MCF 10A (cell line): ENCODE measurements at regions of chr9 and their contacts with region 1.

Region 1: DNA sequence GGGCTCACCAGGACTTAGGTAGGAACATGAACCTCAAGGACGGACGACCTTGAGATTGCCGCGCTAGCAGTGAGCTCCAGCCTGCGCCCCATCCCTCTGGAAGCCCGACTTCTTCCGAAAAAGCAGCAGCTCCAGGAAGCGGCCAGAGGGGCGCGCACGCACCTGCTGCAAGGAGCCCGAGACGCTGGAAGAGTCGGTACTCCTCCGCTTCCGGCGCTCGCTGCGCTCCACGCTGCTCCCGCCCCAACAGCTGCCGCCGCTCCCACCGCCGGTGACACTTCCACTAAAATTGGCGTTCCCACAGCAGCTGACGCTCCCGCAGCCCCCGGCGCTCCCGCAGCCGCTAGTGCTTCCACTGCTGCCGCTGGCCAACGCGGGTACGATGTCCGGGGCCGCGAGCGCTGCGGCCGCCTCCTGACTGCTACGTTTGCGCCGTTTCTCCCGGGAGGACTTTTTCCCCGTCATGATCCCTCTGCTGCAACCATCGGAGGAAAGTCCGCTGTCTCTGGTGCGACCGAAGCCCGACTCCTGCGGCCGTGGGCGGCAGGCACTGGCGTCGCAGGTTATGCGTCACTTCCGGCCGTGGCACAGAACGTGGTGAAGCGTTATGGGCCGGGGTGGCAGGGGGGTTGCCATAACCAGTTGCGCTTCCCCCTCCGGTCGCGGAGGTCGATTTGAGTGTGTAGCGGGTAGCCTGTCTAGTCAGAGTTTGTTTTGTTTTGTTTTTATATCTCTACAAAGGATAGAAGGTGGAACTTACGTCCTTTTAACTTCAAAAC is at the start of gene CAAP1:
- DNase-seq: peak; percentile 93
- H3K4me3 Mint-ChIP-seq: peak within 1 kb of the TSS; percentile 100
- H3K27ac Mint-ChIP-seq: peak within 1 kb of the TSS; percentile 100
- H3K4me1 Mint-ChIP-seq: peaks cover 16% of the 10 kb centered on the region
- H3K27me3 Mint-ChIP-seq: no peaks in the 10 kb centered on the region
- CTCF ChIP-seq: peak; percentile 38
- total RNA-seq, gene CAAP1: 29.2 and 35.2 TPM in 2 replicates

Region 2: DNA sequence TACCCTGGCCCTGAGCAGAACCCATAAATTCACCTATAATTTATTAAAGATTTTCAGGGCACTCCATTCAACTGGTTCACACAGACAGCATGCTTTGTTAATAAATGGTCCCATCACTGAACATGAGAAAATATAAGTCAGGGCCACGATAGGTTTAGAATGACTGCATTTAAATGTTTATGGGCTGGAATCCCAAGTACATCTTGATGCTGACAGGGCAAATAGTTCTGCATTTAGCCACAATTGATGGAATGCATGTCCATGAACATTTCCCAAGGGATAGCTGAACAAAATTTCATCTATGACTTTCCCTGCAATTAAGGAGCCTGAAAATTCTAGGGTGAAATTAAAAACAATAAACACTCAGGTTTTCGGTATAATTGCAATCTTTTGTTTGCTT is 124.3 kb before region 1 on chr9:
- CTCF ChIA-PET with region 1: no interaction called
- POLR2A ChIA-PET with region 1: no interaction called
- intact Hi-C with region 1: no loop called
- DNase-seq: no peak
- H3K4me3 Mint-ChIP-seq: no peak overlapping the region
- H3K27ac Mint-ChIP-seq: no peak overlapping the region
- H3K4me1 Mint-ChIP-seq: no peaks in the 10 kb centered on the region
- H3K27me3 Mint-ChIP-seq: no peaks in the 10 kb centered on the region
- CTCF ChIP-seq: no peak

Region 3: DNA sequence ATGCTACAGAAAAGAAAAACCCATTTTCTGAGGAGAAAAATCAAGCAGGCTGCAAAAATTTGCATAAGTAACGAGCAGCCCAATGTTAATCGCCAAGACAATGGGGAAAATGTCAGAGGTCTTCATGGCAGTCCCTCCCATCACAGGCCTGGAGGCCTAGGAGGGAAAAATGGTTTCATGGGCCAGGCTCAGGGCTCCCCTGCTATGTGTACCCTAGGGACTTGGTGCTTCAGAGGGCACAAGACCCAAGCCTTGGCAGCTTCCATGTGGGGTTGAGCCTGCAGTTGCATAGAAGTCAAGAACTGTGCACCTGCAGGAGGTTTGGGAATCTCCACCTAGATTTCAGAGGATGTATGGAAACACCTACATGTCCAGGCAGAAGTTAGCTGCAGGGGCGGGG is 10.3 kb before region 1 on chr9:
- CTCF ChIA-PET with region 1: interaction called, 4 read pairs
- POLR2A ChIA-PET with region 1: interaction called, 11 read pairs
- intact Hi-C with region 1: no loop called
- DNase-seq: no peak
- H3K4me3 Mint-ChIP-seq: no peak overlapping the region
- H3K27ac Mint-ChIP-seq: no peak overlapping the region
- H3K4me1 Mint-ChIP-seq: no peaks in the 10 kb centered on the region
- H3K27me3 Mint-ChIP-seq: no peaks in the 10 kb centered on the region
- CTCF ChIP-seq: no peak

Region 4: GRCh38 chr9:26946753-26947727 is 54.6 kb after region 1 on chr9 and contains the start of gene PLAA:
- CTCF ChIA-PET with region 1: interaction called, 4 read pairs
- POLR2A ChIA-PET with region 1: interaction called, 27 read pairs
- intact Hi-C with region 1: loop called (anchors 5 kb)
- DNase-seq: peak; percentile 94
- H3K4me3 Mint-ChIP-seq: peak within 1 kb of the TSS; percentile 77
- H3K27ac Mint-ChIP-seq: peak within 1 kb of the TSS; percentile 99
- H3K4me1 Mint-ChIP-seq: peaks cover 32% of the 10 kb centered on the region
- H3K27me3 Mint-ChIP-seq: no peaks in the 10 kb centered on the region
- CTCF ChIP-seq: no peak
- total RNA-seq, gene PLAA: 29.6 and 36.7 TPM in 2 replicates

Region 5: GRCh38 chr9:26955921-26956859 is 63.8 kb after region 1 on chr9 and contains the start of gene IFT74:
- CTCF ChIA-PET with region 1: interaction called, 4 read pairs
- POLR2A ChIA-PET with region 1: interaction called, 24 read pairs
- intact Hi-C with region 1: no loop called
- DNase-seq: peak; percentile 99
- H3K4me3 Mint-ChIP-seq: peak within 1 kb of the TSS; percentile 90
- H3K27ac Mint-ChIP-seq: peak within 1 kb of the TSS; percentile 100
- H3K4me1 Mint-ChIP-seq: peaks cover 14% of the 10 kb centered on the region
- H3K27me3 Mint-ChIP-seq: no peaks in the 10 kb centered on the region
- CTCF ChIP-seq: no peak
- total RNA-seq, gene IFT74: 28.7 and 31.5 TPM in 2 replicates

Region 6: GRCh38 chr9:26975693-26976059 is 83.2 kb after region 1 on chr9:
- CTCF ChIA-PET with region 1: interaction called, 3 read pairs
- POLR2A ChIA-PET with region 1: no interaction called
- intact Hi-C with region 1: loop called (anchors 2 kb)
- DNase-seq: peak; percentile 70
- H3K4me3 Mint-ChIP-seq: no peak overlapping the region
- H3K27ac Mint-ChIP-seq: peak overlapping the region; percentile 94
- H3K4me1 Mint-ChIP-seq: peaks cover 13% of the 10 kb centered on the region
- H3K27me3 Mint-ChIP-seq: no peaks in the 10 kb centered on the region
- CTCF ChIP-seq: peak; percentile 32

Region 7: DNA sequence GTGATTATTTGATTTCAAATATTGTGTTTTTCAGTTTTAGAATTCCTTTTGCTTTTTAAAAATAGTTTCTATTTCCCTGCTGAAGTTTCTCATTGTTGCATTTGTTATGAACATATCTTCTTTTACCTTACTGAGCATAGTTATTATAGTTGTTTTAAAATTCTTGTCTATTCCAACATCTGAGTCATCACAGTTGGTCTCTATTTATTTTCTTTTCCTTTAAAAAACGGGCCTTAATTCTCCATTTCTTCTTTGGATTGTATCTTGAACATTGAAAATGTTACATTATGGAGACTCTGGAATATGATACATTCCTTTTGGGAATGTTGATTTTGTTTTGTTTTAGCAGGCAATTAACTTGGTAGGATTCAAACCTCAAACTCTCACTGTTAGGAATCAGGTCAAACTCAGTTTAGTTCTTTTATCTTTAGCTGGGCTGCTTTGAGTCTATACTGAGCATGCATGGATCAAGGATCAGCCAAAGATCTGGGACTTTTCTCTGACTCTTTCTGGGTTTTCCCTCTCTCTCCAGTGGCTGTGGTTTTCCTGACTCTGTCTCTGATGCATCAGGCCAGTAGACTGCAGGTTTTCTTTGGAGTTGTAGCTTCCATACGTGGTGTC is 286.9 kb after region 1 on chr9:
- CTCF ChIA-PET with region 1: no interaction called
- POLR2A ChIA-PET with region 1: no interaction called
- intact Hi-C with region 1: no loop called
- DNase-seq: no peak
- H3K4me3 Mint-ChIP-seq: no peak overlapping the region
- H3K27ac Mint-ChIP-seq: peak overlapping the region; percentile 79
- H3K4me1 Mint-ChIP-seq: peaks cover 41% of the 10 kb centered on the region
- H3K27me3 Mint-ChIP-seq: no peaks in the 10 kb centered on the region
- CTCF ChIP-seq: no peak

Region 8: DNA sequence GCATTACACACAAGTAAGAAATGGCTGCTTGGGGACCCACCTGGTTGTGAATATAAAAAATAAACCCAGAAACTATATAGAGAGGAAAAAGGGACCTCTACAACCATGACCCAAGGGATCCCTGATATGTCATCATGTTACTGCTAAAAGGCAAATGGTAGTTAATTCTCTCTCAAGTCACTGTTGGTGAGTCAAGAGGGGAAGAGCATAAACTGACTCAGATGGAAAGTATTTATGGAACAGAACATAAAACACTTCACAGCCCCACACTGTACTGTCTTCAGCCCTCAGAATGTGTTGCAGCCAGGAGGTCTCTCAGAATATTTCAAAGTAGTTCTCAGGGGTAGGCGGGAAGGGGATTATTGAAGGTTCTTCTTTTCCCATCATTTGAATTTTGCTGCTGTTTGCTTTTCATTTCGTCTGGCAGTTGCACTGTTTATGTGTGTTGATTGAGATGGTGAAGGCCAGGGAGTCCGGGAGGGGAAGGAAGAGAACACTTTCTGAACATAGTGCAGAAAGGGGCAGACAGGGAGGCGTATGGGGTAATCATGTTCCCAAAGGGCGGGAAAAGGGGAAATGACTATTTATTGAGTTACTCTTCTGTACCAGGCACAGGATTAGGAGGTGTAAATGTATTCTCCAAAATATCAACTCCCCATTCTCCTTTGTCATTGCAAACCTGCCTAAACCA is 302.1 kb after region 1 on chr9:
- CTCF ChIA-PET with region 1: no interaction called
- POLR2A ChIA-PET with region 1: no interaction called
- intact Hi-C with region 1: loop called (anchors 5 kb)
- DNase-seq: peak; percentile 82
- H3K4me3 Mint-ChIP-seq: peak overlapping the region; percentile 13
- H3K27ac Mint-ChIP-seq: peak overlapping the region; percentile 84
- H3K4me1 Mint-ChIP-seq: peaks cover 36% of the 10 kb centered on the region
- H3K27me3 Mint-ChIP-seq: no peaks in the 10 kb centered on the region
- CTCF ChIP-seq: no peak

Region 9: DNA sequence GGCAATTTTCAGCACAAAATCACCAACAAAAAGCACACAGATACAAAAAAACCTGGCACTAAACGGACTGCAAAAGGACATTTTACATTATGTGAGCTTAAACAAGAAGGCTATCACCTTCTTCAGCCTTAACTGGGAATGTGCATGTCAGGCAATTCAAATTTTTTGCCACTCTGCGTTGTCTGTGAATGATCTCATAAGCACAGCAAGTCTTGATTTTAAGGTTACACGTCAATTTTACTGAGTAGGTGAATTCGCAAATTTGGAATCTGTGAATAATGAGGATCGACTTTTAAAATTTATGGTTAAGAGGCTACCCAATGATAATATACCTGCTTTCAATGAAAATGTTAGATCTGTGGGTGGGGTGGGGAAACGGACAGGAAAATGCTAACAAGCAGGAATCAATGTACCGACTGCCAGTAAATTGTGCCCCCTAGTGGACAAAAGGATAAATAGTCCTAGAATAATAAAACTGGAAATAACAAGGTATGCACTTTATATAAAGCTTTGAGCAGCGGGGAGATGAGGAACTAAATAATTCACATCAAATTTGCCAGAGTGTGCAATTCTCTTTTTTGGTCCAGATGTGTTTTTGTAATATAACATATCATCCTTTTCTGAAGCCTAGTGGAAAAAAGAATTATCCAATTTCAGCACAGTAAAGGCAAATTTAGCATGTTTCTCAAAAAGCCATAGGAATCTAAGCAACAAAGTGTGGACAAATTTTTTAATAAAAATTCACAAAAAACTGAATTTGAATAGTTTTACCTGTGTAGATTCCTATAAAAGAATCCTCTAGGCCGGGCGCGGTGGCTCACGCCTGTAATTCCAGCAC is 384.0 kb after region 1 on chr9:
- CTCF ChIA-PET with region 1: no interaction called
- POLR2A ChIA-PET with region 1: no interaction called
- intact Hi-C with region 1: loop called (anchors 5 kb)
- DNase-seq: peak; percentile 70
- H3K4me3 Mint-ChIP-seq: peak overlapping the region; percentile 2
- H3K27ac Mint-ChIP-seq: peak overlapping the region; percentile 57
- H3K4me1 Mint-ChIP-seq: peaks cover 10% of the 10 kb centered on the region
- H3K27me3 Mint-ChIP-seq: no peaks in the 10 kb centered on the region
- CTCF ChIP-seq: peak; percentile 60